Endothelial cell of umbilical vein (primary cell): ENCODE measurements at regions of chr12 and their contacts with region 1.

Region 1: DNA sequence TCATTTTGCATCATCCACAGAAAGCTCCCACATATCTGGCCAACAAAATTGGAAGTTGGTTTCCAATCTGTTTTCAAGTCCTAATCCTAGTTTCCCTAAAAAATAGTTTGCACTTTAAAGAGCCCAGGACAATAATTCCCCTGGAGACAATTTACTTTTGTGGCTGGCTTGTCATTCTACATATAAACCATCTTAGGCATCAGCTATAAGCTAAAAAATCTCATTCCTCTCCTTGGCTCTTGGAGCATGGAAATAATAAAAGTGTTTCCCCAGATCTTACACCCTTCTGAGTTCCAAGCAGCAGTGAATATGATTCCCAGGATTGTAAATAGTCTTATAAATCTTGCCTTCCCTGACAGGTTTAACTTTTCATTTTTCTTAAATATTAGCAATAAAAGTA is 89.1 kb upstream of the NUDT4 start:
- DNase-seq: no peak
- H3K4me3 ChIP-seq: no peak overlapping the region
- H3K27ac ChIP-seq: no peak overlapping the region
- H3K4me1 ChIP-seq: no peaks in the 10 kb centered on the region
- H3K27me3 ChIP-seq: no peaks in the 10 kb centered on the region
- CTCF ChIP-seq: no peak
- POLR2A ChIP-seq: no peak

Region 2: GRCh38 chr12:93302331-93303229 is 14.0 kb after region 1 on chr12:
- CTCF ChIA-PET with region 1: interaction called, 4 read pairs
- POLR2A ChIA-PET with region 1: interaction called, 4 read pairs
- dilution Hi-C with region 1: no loop called
- intact Hi-C with region 1: loop called (anchors 2 kb)
- DNase-seq: peak; percentile 73
- H3K4me3 ChIP-seq: no peak overlapping the region
- H3K27ac ChIP-seq: no peak overlapping the region
- H3K4me1 ChIP-seq: peaks cover 7% of the 10 kb centered on the region
- H3K27me3 ChIP-seq: no peaks in the 10 kb centered on the region
- CTCF ChIP-seq: no peak
- POLR2A ChIP-seq: no peak